GM12878 (cell line): ENCODE measurements at regions of chrX and their contacts with region 1.

Region 1: GRCh38 chrX:24838629-24839028 is 144.9 kb downstream of the POLA1 start:
- DNase-seq: peak; percentile 1
- ATAC-seq: peak; percentile 68
- H3K4me3 ChIP-seq: no peak overlapping the region
- H3K27ac ChIP-seq: no peak overlapping the region
- H3K4me1 ChIP-seq: no peaks in the 10 kb centered on the region
- H3K27me3 ChIP-seq: no peaks in the 10 kb centered on the region
- CTCF ChIP-seq: peak; percentile 28 to 60 (median 59); a peak in 5 of 6 replicates
- EP300 ChIP-seq: no peak
- POLR2A ChIP-seq: no peak
- RAD21 ChIP-seq: peak; percentile 53

Region 2: DNA sequence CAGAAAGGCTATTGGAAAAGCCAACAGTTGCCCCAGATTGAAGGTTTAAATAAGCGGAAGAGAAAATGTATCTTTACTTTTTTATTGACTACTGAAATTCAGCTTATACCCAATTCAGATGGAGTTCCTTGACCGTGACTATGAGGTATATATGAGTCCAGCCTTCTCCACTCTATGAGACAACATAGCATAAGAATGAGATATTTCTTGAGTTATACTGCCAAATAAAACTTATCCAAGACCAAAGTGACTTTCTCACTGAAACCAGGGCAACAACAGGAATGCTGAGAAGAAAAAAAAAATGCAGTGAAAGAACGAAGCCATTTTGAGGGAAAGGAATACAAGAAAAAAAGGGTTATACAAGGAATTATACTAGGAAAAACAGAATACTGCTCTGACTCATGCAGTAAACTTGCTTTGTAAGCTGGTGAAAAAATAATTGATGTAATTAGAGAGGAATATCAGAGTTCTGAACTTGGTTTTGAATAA is 389.8 kb before region 1 on chrX:
- CTCF ChIA-PET with region 1: no interaction called
- POLR2A ChIA-PET with region 1: no interaction called
- RAD21 ChIA-PET with region 1: no interaction called
- SMC1A ChIA-PET with region 1: no interaction called
- in situ Hi-C with region 1: no loop called
- intact Hi-C with region 1: no loop called
- DNase-seq: no peak
- ATAC-seq: no peak
- H3K4me3 ChIP-seq: no peak overlapping the region
- H3K27ac ChIP-seq: no peak overlapping the region
- H3K4me1 ChIP-seq: no peaks in the 10 kb centered on the region
- H3K27me3 ChIP-seq: no peaks in the 10 kb centered on the region; a peak in 1 of 4 replicates
- CTCF ChIP-seq: no peak
- EP300 ChIP-seq: no peak
- POLR2A ChIP-seq: no peak
- RAD21 ChIP-seq: no peak

Region 3: GRCh38 chrX:24728530-24728929 is 110.1 kb before region 1 on chrX:
- CTCF ChIA-PET with region 1: no interaction called
- POLR2A ChIA-PET with region 1: no interaction called
- RAD21 ChIA-PET with region 1: no interaction called
- SMC1A ChIA-PET with region 1: no interaction called
- in situ Hi-C with region 1: no loop called
- intact Hi-C with region 1: no loop called
- DNase-seq: no peak
- ATAC-seq: no peak
- H3K4me3 ChIP-seq: no peak overlapping the region
- H3K27ac ChIP-seq: no peak overlapping the region
- H3K4me1 ChIP-seq: no peaks in the 10 kb centered on the region
- H3K27me3 ChIP-seq: no peaks in the 10 kb centered on the region
- CTCF ChIP-seq: no peak
- EP300 ChIP-seq: no peak
- POLR2A ChIP-seq: no peak
- RAD21 ChIP-seq: no peak

Region 4: DNA sequence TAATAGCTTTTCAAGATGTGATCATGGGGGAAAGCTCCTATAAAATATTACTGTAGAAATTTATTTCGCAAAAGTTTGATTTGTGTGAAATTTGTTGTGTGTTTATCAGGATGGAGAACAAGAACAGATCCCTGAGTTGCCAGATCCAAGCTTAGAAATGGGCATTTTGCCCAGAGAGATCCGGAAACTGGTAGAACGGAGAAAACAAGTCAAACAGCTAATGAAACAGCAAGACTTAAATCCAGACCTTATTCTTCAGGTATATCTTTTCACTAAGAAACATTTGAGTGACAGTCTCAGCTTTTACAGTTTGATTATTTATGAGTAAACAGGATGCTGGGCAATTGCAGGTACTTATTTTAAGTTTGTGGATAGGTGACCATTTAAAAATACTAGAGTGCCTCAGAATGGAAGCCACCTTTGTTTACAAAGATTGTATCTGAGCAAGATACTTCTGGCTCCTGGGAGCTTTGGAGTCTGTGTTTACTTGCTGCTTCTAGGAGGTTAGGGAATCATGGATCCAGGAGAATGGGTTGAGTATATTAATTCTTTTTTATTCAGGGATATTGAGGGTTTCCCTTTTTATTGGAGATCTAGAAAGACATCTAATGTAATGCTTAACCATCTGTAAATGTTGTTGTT is 90.3 kb before region 1 on chrX:
- CTCF ChIA-PET with region 1: interaction called, 13 read pairs
- POLR2A ChIA-PET with region 1: no interaction called
- RAD21 ChIA-PET with region 1: interaction called, 3 read pairs
- SMC1A ChIA-PET with region 1: interaction called, 7 read pairs
- in situ Hi-C with region 1: no loop called
- intact Hi-C with region 1: loop called (anchors 5 kb)
- DNase-seq: no peak
- ATAC-seq: no peak
- H3K4me3 ChIP-seq: no peak overlapping the region
- H3K27ac ChIP-seq: no peak overlapping the region
- H3K4me1 ChIP-seq: no peaks in the 10 kb centered on the region
- H3K27me3 ChIP-seq: no peaks in the 10 kb centered on the region
- CTCF ChIP-seq: no peak
- EP300 ChIP-seq: no peak
- POLR2A ChIP-seq: no peak
- RAD21 ChIP-seq: no peak

Region 5: GRCh38 chrX:24805201-24805600 is 33.4 kb before region 1 on chrX:
- CTCF ChIA-PET with region 1: interaction called, 16 read pairs
- POLR2A ChIA-PET with region 1: no interaction called
- RAD21 ChIA-PET with region 1: no interaction called
- SMC1A ChIA-PET with region 1: no interaction called
- in situ Hi-C with region 1: no loop called
- intact Hi-C with region 1: no loop called
- DNase-seq: no peak
- ATAC-seq: no peak
- H3K4me3 ChIP-seq: no peak overlapping the region
- H3K27ac ChIP-seq: no peak overlapping the region
- H3K4me1 ChIP-seq: no peaks in the 10 kb centered on the region
- H3K27me3 ChIP-seq: no peaks in the 10 kb centered on the region
- CTCF ChIP-seq: no peak
- EP300 ChIP-seq: no peak
- POLR2A ChIP-seq: no peak
- RAD21 ChIP-seq: no peak

Region 6: DNA sequence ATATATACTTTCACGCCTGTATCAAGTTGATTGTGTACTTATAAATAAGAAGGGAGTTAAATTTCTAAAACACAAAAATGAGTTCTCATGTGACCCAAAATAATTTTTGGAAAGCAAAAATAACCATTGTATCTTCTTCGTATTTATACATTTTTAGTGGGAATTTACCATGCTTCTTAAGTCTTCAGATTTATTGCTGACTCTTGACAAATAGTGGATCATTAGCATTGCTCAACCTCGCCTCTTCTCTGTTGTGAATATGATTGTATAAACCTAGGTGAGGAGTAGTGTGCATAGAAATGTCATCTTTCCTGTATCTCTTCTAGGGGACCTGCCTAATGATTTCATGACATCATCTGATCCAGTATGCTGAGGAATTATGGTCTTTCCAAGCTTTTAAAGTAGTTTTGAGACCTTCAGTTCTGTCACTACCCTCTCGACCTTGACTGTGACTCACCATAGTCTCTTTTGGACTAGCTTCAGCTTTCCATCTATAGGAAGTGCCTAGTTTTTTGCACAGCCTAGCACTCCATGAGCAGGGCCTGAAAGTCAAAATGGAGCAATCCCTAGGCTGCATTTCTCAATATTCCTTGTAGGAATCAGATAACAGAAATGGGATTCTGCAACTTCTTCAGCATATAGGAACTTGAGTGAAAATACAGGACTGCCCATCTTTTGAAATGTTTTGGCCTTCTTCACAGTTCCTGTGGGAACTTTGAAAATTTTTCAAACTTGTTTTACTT is 19.5 kb after region 1 on chrX:
- CTCF ChIA-PET with region 1: interaction called, 58 read pairs
- POLR2A ChIA-PET with region 1: interaction called, 4 read pairs
- RAD21 ChIA-PET with region 1: no interaction called
- SMC1A ChIA-PET with region 1: interaction called, 6 read pairs
- in situ Hi-C with region 1: no loop called
- intact Hi-C with region 1: no loop called
- DNase-seq: no peak
- ATAC-seq: no peak
- H3K4me3 ChIP-seq: no peak overlapping the region
- H3K27ac ChIP-seq: no peak overlapping the region
- H3K4me1 ChIP-seq: no peaks in the 10 kb centered on the region
- H3K27me3 ChIP-seq: no peaks in the 10 kb centered on the region
- CTCF ChIP-seq: no peak
- EP300 ChIP-seq: no peak
- POLR2A ChIP-seq: no peak
- RAD21 ChIP-seq: no peak

Region 7: DNA sequence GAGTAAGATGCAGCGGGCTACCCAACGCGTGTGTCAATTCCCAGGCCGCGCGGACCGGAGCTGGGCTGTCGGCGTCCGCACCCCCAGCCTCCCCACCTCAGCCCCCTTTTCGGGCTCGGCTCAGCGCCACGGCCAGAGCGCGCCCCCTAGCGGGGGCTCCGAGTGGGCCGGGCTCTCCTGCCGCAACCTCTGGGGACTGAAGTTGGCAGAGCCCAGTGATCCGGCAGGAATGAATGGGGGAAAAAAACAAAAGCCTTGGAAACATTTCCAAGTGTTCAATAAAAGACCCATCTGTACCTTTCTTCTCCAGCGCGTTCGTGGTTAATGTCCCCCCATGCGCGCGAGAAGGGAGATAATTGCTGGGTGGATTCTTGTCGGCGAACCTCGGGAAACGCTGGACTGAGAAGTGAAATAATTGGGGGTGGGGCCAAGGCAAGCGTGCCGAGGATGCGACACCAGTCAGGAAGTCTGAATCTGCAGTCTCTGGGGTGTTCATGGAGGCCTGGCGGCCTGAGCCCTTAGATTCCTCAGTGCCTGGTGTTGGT is 182.3 kb after region 1 on chrX:
- CTCF ChIA-PET with region 1: interaction called, 29 read pairs
- POLR2A ChIA-PET with region 1: no interaction called
- RAD21 ChIA-PET with region 1: interaction called, 4 read pairs
- SMC1A ChIA-PET with region 1: interaction called, 6 read pairs
- in situ Hi-C with region 1: no loop called
- intact Hi-C with region 1: loop called (anchors 2 kb)
- DNase-seq: no peak
- ATAC-seq: peak; percentile 86
- H3K4me3 ChIP-seq: no peak overlapping the region
- H3K27ac ChIP-seq: no peak overlapping the region
- H3K4me1 ChIP-seq: no peaks in the 10 kb centered on the region
- H3K27me3 ChIP-seq: peaks cover 5 to 13% of the 10 kb centered on the region in 2 experiments
- CTCF ChIP-seq: peak; percentile 58 to 74 (median 59)
- EP300 ChIP-seq: no peak
- POLR2A ChIP-seq: no peak
- RAD21 ChIP-seq: peak; percentile 63